ENCODE measurements at regions of chr11 and their contacts with region 1.

Region 1: GRCh38 chr11:7513234-7514098 is at the start of gene PPFIBP2:
- DNase-seq: no peak
- H3K4me3 ChIP-seq: peak within 1 kb of the TSS; percentile 67
- H3K27me3 ChIP-seq: peaks cover 4% of the 10 kb centered on the region
- CTCF ChIP-seq: peak; percentile 76
- polyA plus RNA-seq, gene PPFIBP2: 20.6 and 29.9 TPM in 2 replicates

Region 2: DNA sequence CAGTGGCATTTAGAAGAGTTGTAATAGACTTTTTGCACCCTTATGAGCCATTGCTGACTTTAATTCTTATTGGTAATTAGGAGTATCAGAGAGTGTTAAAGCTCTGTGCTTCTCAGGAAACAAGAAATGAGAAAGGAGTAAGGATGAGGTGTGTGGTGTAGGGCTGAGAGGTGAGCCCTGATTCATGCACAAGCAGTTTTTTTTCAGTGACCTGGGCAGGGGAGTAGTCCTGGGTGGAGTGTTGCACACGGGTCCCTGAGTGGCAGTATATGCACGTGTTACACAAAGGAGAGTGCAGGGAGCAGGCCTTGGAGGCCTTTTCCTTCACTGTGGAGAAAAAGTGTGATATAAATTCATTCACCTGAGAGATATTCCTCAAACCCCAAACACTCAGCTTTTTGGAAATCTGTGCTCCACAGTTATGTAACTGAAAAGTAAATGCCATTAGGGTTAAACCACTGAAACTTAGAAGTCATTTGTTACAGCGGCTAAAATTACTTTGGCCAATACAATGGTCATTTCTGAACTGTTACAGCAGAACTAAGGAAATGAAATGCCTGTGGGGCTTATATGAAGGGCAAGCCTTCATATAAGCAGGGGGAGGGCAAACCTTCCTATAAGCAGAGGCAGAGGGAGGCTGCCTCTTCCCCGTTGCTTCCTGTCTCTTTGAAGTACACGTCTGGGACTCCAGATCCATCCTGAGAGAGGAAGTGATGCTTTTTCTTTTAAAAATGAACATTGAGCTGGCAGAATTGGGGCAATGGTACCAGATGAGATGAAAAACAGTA is 90.7 kb before region 1 on chr11:
- CTCF ChIA-PET with region 1: no interaction called
- POLR2A ChIA-PET with region 1: no interaction called
- DNase-seq: no peak
- H3K4me3 ChIP-seq: no peak overlapping the region
- H3K27me3 ChIP-seq: no peaks in the 10 kb centered on the region
- CTCF ChIP-seq: no peak

Region 3: GRCh38 chr11:7490054-7490453 is 23.4 kb before region 1 on chr11:
- CTCF ChIA-PET with region 1: interaction called, 16 read pairs
- POLR2A ChIA-PET with region 1: no interaction called
- DNase-seq: peak; percentile 63
- H3K4me3 ChIP-seq: no peak overlapping the region
- H3K27me3 ChIP-seq: no peaks in the 10 kb centered on the region; the same call in 1 of the 2 replicates
- CTCF ChIP-seq: no peak

Region 4: GRCh38 chr11:7563281-7563680 is 49.8 kb after region 1 on chr11:
- CTCF ChIA-PET with region 1: interaction called, 48 read pairs
- POLR2A ChIA-PET with region 1: no interaction called
- DNase-seq: no peak
- H3K4me3 ChIP-seq: no peak overlapping the region
- H3K27me3 ChIP-seq: no peaks in the 10 kb centered on the region
- CTCF ChIP-seq: no peak

Region 5: GRCh38 chr11:7637447-7638157 is 124.1 kb after region 1 on chr11:
- CTCF ChIA-PET with region 1: no interaction called
- POLR2A ChIA-PET with region 1: no interaction called
- DNase-seq: peak; percentile 46
- H3K4me3 ChIP-seq: no peak overlapping the region
- H3K27me3 ChIP-seq: no peaks in the 10 kb centered on the region
- CTCF ChIP-seq: no peak

Region 6: GRCh38 chr11:7657306-7658025 is 144.0 kb after region 1 on chr11:
- CTCF ChIA-PET with region 1: interaction called, 25 read pairs
- POLR2A ChIA-PET with region 1: no interaction called
- DNase-seq: no peak
- H3K4me3 ChIP-seq: no peak overlapping the region
- H3K27me3 ChIP-seq: no peaks in the 10 kb centered on the region
- CTCF ChIP-seq: peak; percentile 70

Region 7: DNA sequence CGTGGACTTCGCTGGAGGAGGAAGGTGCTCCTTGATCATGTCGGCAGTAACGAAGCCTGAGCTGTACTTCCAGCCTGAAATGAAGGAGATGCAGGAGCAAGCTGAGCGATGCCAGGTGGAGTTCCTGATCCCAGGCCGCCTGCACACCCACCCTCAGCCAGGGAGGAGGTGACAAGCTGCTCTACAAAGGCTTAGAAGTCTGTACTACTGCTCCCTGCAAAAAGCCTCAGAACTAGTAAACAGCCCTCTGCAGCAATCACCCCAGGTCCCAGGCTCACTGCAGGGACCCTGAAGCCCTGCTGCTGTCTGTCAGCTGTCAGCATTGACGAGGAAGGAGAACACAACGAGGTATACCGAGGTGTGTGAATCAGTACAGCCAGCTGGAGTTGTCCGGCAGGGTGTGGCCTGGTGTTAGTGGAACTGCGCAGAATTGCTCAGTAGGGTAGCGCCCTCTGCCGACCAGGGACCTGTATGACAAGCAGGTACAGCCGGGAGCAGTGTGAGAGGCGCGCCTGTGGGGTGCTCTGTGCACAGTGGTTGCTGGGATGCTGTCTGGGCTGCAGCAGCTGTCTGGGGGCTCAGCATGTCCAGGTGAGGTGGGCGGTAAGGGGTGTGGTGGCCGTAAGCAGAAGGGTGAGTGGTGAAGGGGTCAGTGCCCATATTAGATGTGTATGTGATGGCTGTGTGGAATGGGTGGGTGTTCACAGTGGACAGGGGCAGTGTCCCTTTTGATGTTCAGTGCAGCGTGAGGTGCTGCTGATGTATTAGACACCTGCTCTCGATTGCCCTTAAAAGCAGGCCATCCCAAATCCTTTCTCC is 152.2 kb after region 1 on chr11:
- CTCF ChIA-PET with region 1: interaction called, 14 read pairs
- POLR2A ChIA-PET with region 1: no interaction called
- DNase-seq: no peak
- H3K4me3 ChIP-seq: no peak overlapping the region
- H3K27me3 ChIP-seq: no peaks in the 10 kb centered on the region
- CTCF ChIP-seq: peak; percentile 90